ENCODE measurements at regions of chr3 and their contacts with region 1.

Region 1: DNA sequence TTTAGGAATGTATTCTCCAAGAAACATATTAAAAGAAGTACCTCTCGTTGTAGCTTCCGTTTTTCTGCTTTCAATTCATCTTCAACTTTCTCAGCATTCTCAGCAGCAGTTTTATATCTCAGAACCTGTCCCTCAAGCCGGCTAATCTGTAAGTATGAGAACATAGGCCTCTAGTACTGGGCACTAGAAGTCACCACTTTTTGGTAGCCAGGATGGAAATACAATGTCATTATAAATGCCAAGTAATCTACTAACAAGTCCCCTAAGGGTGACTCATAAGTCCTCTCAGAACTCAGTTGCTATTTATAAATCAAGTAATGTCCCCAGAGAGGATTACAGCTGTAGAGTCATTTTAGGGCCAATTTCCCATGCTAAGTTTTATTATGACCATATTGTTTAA is 61.1 kb downstream of the MLH1 start:
- DNase-seq: no peak
- H3K4me3 ChIP-seq: no peak overlapping the region
- H3K27ac ChIP-seq: no peak overlapping the region
- H3K4me1 ChIP-seq: no peaks in the 10 kb centered on the region
- H3K27me3 ChIP-seq: no peaks in the 10 kb centered on the region
- CTCF ChIP-seq: no peak

Region 2: GRCh38 chr3:37174532-37175126 is 120.3 kb after region 1 on chr3 and contains the start of gene LRRFIP2:
- CTCF ChIA-PET with region 1: interaction called, 23 read pairs
- dilution Hi-C with region 1: no loop called
- in situ Hi-C with region 1: no loop called
- intact Hi-C with region 1: no loop called
- DNase-seq: peak; percentile 87
- H3K4me3 ChIP-seq: peak within 1 kb of the TSS; percentile 72 to 88 (median 76)
- H3K27ac ChIP-seq: peak within 1 kb of the TSS; percentile 97
- H3K4me1 ChIP-seq: peaks cover 31% of the 10 kb centered on the region
- H3K27me3 ChIP-seq: no peaks in the 10 kb centered on the region
- CTCF ChIP-seq: no peak
- total RNA-seq, gene LRRFIP2: 78.7 to 122 TPM

Region 3: DNA sequence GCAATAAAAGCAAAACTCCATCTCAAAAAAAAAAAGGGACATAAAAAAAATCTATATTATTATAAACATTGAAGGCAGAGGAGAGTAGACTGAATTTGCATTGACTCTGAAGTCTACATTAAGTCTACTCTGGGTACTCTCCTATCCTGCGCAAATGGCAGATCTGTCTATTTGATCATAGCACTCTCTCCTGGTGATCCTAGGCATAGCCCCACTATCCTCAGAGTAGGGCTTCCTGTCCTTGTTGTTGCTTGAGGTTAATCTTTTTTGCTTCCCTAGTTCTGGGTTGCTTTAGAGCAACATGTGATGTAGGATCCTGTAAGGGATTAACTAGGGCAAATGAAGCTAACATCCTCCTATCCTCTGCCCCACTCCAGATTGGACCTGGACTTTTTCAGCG is 202.1 kb after region 1 on chr3:
- CTCF ChIA-PET with region 1: no interaction called
- dilution Hi-C with region 1: no loop called
- in situ Hi-C with region 1: loop called in 1 of 2 experiments (anchors 25 kb)
- intact Hi-C with region 1: no loop called
- DNase-seq: no peak
- H3K4me3 ChIP-seq: no peak overlapping the region
- H3K27ac ChIP-seq: no peak overlapping the region
- H3K4me1 ChIP-seq: no peaks in the 10 kb centered on the region
- H3K27me3 ChIP-seq: no peaks in the 10 kb centered on the region
- CTCF ChIP-seq: peak; percentile 39 to 43

Region 4: DNA sequence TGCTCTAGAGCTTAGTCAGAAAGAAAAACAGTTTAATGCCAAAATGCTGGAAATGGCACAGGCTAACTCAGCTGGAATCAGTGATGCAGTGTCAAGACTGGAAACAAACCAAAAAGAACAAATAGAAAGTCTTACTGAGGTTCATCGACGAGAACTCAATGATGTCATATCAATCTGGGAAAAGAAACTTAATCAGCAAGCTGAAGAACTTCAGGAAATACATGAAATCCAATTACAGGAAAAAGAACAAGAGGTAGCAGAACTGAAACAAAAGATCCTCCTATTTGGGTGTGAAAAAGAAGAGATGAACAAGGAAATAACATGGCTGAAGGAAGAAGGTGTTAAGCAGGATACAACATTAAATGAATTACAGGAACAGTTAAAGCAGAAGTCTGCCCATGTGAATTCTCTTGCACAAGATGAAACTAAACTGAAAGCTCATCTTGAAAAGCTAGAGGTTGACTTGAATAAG is 270.5 kb after region 1 on chr3:
- CTCF ChIA-PET with region 1: no interaction called
- dilution Hi-C with region 1: no loop called
- in situ Hi-C with region 1: no loop called
- intact Hi-C with region 1: no loop called
- DNase-seq: no peak
- H3K4me3 ChIP-seq: no peak overlapping the region
- H3K27ac ChIP-seq: no peak overlapping the region
- H3K4me1 ChIP-seq: no peaks in the 10 kb centered on the region
- H3K27me3 ChIP-seq: no peaks in the 10 kb centered on the region
- CTCF ChIP-seq: no peak

Measured in mammary epithelial cell (primary cell).